ENCODE measurements at regions of chr3 and their contacts with region 1.

Region 1: DNA sequence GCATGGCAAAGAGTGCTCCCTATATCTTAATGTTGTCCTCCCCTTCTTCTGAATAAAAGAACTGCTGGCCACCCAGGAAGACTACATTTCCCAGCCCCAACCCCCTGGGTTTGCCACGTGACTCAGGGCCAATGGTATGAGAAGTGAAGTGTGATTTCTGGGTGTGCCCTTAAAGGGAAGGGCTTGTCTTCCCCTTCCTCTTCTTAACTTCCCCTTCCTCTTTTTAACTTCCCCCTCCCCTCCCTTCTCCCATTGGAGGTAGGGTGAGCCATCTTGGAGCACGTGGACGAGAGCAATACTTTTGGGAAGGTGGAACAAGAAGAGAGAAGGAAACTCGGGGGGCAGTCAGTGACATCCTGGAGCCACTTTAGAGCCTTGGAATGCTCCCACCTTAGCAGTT is 6.8 kb upstream of the KBTBD12 start:
- DNase-seq: no peak
- ATAC-seq: peak in 2 of 4 donors; percentile 26 to 36
- H3K4me3 ChIP-seq: no peak overlapping the region
- H3K27ac ChIP-seq: no peak overlapping the region
- H3K4me1 ChIP-seq: peaks cover 10% of the 10 kb centered on the region
- H3K27me3 ChIP-seq: no peaks in the 10 kb centered on the region
- CTCF ChIP-seq: no peak

Region 2: DNA sequence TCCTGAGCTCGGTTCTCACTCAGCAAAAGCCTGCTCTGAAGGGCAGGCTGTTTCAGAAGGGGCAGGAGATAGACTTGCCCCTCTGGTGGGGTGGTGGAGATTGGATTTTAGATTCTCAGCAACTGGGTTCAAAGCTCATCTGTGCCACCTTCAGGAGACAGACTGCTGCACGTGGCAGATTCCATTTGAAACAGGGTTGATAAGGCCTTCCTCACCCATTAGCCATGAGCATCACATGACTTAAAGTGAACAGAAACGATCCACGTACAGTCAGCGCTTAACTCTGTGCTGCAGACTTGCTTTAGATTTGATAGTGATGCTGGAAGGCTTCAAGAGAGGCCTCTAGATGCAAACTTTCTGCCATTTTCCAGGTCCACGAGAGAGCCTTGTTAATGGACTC is 50.9 kb before region 1 on chr3:
- intact Hi-C with region 1: no loop called
- DNase-seq: no peak
- ATAC-seq: no peak
- H3K4me3 ChIP-seq: no peak overlapping the region
- H3K27ac ChIP-seq: no peak overlapping the region
- H3K4me1 ChIP-seq: no peaks in the 10 kb centered on the region
- H3K27me3 ChIP-seq: no peaks in the 10 kb centered on the region
- CTCF ChIP-seq: no peak

Region 3: DNA sequence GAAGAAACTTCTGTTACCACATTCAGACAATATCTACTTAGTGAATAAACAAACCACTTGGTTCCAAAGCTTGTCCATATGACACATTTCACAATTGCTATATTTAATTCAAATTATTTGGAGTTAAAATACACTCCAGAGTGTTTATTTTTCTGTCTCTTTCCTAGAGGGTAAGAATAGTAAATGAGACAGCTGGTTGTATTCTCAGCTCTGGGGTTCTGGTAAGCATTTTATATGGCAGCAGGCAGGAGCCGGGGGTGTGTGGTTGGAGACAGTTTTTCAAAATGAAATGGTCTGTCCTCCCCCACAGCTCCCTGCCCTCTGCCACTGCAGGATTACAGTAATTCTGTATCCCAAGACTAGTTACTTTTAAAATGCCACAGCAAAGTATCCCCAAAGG is 133.1 kb after region 1 on chr3:
- intact Hi-C with region 1: loop called in 1 of 2 experiments (anchors 10 kb)
- DNase-seq: no peak
- ATAC-seq: no peak
- H3K4me3 ChIP-seq: no peak overlapping the region
- H3K27ac ChIP-seq: no peak overlapping the region
- H3K4me1 ChIP-seq: no peaks in the 10 kb centered on the region
- H3K27me3 ChIP-seq: no peaks in the 10 kb centered on the region
- CTCF ChIP-seq: no peak

Region 4: GRCh38 chr3:128663151-128663550 is 754.9 kb after region 1 on chr3:
- intact Hi-C with region 1: no loop called
- DNase-seq: no peak
- ATAC-seq: no peak
- H3K4me3 ChIP-seq: no peak overlapping the region
- H3K27ac ChIP-seq: no peak overlapping the region
- H3K4me1 ChIP-seq: no peaks in the 10 kb centered on the region
- H3K27me3 ChIP-seq: no peaks in the 10 kb centered on the region
- CTCF ChIP-seq: no peak

Measured in psoas muscle (tissue), 8 donors.